ENCODE measurements at regions of chrX and their contacts with region 1.

Region 1: GRCh38 chrX:21985332-21985777 is 44.8 kb downstream of the SMS start:
- DNase-seq: peak; percentile 61 to 75 (median 74)
- H3K4me3 ChIP-seq: no peak overlapping the region
- H3K4me3 Mint-ChIP-seq: no peak overlapping the region
- H3K27ac ChIP-seq: no peak overlapping the region
- H3K27ac Mint-ChIP-seq: peak overlapping the region in 2 of 7 donors; percentile 5 to 8
- H3K4me1 ChIP-seq: no peaks in the 10 kb centered on the region
- H3K4me1 Mint-ChIP-seq: peaks cover 2 to 5% (median 3%) of the 10 kb centered on the region in 4 donors
- H3K27me3 ChIP-seq: no peaks in the 10 kb centered on the region
- H3K27me3 Mint-ChIP-seq: no peaks in the 10 kb centered on the region

Region 2: GRCh38 chrX:21972721-21973120 is 12.6 kb before region 1 on chrX:
- CTCF ChIA-PET with region 1: interaction called, 35 read pairs
- POLR2A ChIA-PET with region 1: interaction called, 23 read pairs
- intact Hi-C with region 1: no loop called
- DNase-seq: peak; percentile 38 to 69 (median 59)
- H3K4me3 ChIP-seq: no peak overlapping the region
- H3K4me3 Mint-ChIP-seq: peak overlapping the region; percentile 33 to 81 (median 70)
- H3K27ac ChIP-seq: peak overlapping the region; percentile 57
- H3K27ac Mint-ChIP-seq: peak overlapping the region; percentile 64 to 96 (median 93)
- H3K4me1 ChIP-seq: peaks cover 23% of the 10 kb centered on the region
- H3K4me1 Mint-ChIP-seq: peaks cover 17 to 34% (median 26%) of the 10 kb centered on the region in 4 donors
- H3K27me3 ChIP-seq: no peaks in the 10 kb centered on the region
- H3K27me3 Mint-ChIP-seq: no peaks in the 10 kb centered on the region

Region 3: GRCh38 chrX:22135994-22136684 is 150.8 kb after region 1 on chrX:
- CTCF ChIA-PET with region 1: interaction called, 19 read pairs
- POLR2A ChIA-PET with region 1: no interaction called
- intact Hi-C with region 1: loop called (anchors 1 kb)
- DNase-seq: peak in 4 of 5 donors; percentile 40 to 51 (median 43)
- H3K4me3 ChIP-seq: no peak overlapping the region
- H3K4me3 Mint-ChIP-seq: peak overlapping the region in 7 of 8 donors; percentile 32 to 71 (median 57)
- H3K27ac ChIP-seq: no peak overlapping the region
- H3K27ac Mint-ChIP-seq: no peak overlapping the region
- H3K4me1 ChIP-seq: no peaks in the 10 kb centered on the region
- H3K4me1 Mint-ChIP-seq: peaks cover 4 to 13% (median 7%) of the 10 kb centered on the region in 4 donors
- H3K27me3 ChIP-seq: no peaks in the 10 kb centered on the region
- H3K27me3 Mint-ChIP-seq: no peaks in the 10 kb centered on the region

Region 4: DNA sequence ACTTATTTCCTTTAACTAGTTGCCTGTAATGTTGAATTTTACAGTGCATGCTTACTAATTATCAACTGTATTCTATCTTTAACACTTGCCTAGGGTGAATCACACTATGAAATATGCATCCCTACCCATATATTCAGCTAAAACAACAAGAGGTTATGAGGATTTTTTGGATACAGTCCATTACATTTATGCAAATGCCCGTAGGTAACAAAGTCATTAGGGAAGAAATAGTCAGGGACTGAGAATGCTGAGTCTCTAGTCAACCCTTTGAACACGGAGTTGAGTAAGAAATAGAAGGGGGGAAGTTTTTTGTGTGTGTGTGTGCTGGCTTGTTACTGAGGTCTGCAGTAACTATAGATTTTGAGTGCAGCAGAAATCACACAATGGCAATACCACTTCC is 261.3 kb after region 1 on chrX:
- CTCF ChIA-PET with region 1: no interaction called
- POLR2A ChIA-PET with region 1: no interaction called
- intact Hi-C with region 1: no loop called
- DNase-seq: no peak
- H3K4me3 ChIP-seq: no peak overlapping the region
- H3K4me3 Mint-ChIP-seq: no peak overlapping the region
- H3K27ac ChIP-seq: no peak overlapping the region
- H3K27ac Mint-ChIP-seq: no peak overlapping the region
- H3K4me1 ChIP-seq: no peaks in the 10 kb centered on the region
- H3K4me1 Mint-ChIP-seq: no peaks in the 10 kb centered on the region
- H3K27me3 ChIP-seq: no peaks in the 10 kb centered on the region
- H3K27me3 Mint-ChIP-seq: no peaks in the 10 kb centered on the region

Region 5: DNA sequence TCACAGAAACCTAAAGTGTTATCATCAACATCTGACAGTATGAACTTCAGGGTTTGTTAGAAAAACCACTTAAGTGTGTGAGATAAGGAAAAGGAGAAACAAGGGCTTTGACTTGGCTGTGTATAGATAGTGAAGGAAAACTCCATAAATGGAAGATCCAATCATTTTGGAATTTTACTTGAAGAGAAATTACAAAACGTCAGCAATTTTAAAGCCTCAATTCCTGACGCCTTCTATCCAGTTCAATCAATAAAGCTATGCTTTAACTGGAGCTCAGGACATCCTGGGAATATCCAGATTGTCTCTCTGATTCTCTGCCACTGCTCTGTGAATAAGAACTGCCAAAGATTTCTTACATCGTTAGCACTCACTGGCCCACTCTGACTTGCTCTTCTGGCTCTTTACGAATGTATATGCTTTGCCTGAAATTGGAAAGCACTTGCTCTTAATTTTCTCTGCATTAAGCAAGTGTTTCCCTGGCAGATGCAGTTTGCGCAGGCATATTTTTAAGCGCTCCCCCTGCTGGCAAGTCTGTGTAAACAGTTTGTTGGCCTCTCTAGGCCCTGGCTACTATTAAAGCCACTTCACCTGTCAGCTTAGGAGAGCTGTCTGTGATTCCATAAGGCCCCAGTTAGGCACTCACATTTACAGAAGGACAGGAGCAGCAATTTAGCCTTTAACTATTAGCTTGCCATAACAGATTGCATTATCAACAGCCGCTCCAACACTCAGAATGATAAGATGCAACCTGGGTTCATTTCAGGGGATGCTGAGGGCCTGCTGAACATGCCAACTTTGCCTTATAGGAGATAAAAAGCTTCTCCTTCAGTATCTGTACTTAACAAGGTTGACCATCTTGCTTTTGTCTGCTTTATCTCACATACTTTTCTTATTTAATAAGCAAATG is 763.0 kb after region 1 on chrX:
- CTCF ChIA-PET with region 1: interaction called, 10 read pairs
- POLR2A ChIA-PET with region 1: no interaction called
- intact Hi-C with region 1: no loop called
- DNase-seq: peak in 4 of 5 donors; percentile 17 to 41 (median 31)
- H3K4me3 ChIP-seq: no peak overlapping the region
- H3K4me3 Mint-ChIP-seq: no peak overlapping the region
- H3K27ac ChIP-seq: no peak overlapping the region
- H3K27ac Mint-ChIP-seq: no peak overlapping the region
- H3K4me1 ChIP-seq: no peaks in the 10 kb centered on the region
- H3K4me1 Mint-ChIP-seq: no peaks in the 10 kb centered on the region
- H3K27me3 ChIP-seq: no peaks in the 10 kb centered on the region
- H3K27me3 Mint-ChIP-seq: peaks cover 0 to 3% of the 10 kb centered on the region in 2 donors